WTC11 (cell line): ENCODE measurements at regions of chr15 and their contacts with region 1.

Region 1: GRCh38 chr15:32664796-32665195 is 23.3 kb downstream of the SCG5 start:
- DNase-seq: no peak
- ATAC-seq: no peak
- H3K4me3 Mint-ChIP-seq: no peak overlapping the region
- H3K27ac Mint-ChIP-seq: no peak overlapping the region
- H3K4me1 Mint-ChIP-seq: peaks cover 17% of the 10 kb centered on the region
- H3K27me3 Mint-ChIP-seq: no peaks in the 10 kb centered on the region
- CTCF ChIP-seq: no peak

Region 2: DNA sequence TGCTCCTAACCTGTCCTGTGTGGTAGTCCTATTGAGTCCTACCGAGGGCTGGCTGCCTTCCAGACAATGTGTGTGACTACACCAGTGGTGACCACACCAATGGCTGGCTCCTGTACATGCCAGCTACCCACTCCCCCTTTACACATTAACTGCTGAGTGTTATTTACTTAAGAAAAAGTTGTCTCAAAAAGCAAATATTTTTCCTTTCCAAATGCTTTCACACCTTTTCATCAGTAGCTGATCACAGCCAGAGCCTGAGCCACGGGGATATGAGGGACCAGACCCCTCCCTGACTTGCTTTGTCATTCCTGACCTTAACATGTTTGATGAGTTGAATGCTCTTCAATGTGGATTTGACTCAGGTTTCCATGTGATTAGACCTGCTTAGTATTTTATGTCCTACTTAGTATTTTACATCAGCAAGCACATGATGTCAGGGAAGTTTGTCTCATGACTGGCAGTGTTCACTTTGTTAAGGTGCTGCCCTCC is 23.4 kb after region 1 on chr15:
- CTCF ChIA-PET with region 1: no interaction called
- POLR2A ChIA-PET with region 1: no interaction called
- DNase-seq: no peak
- ATAC-seq: no peak
- H3K4me3 Mint-ChIP-seq: no peak overlapping the region
- H3K27ac Mint-ChIP-seq: no peak overlapping the region
- H3K4me1 Mint-ChIP-seq: peaks cover 23% of the 10 kb centered on the region
- H3K27me3 Mint-ChIP-seq: no peaks in the 10 kb centered on the region
- CTCF ChIP-seq: no peak

Region 3: GRCh38 chr15:32784581-32784980 is 119.8 kb after region 1 on chr15:
- CTCF ChIA-PET with region 1: no interaction called
- POLR2A ChIA-PET with region 1: no interaction called
- DNase-seq: no peak
- ATAC-seq: no peak
- H3K4me3 Mint-ChIP-seq: no peak overlapping the region
- H3K27ac Mint-ChIP-seq: no peak overlapping the region
- H3K4me1 Mint-ChIP-seq: peaks cover 9% of the 10 kb centered on the region
- H3K27me3 Mint-ChIP-seq: no peaks in the 10 kb centered on the region
- CTCF ChIP-seq: no peak

Region 4: DNA sequence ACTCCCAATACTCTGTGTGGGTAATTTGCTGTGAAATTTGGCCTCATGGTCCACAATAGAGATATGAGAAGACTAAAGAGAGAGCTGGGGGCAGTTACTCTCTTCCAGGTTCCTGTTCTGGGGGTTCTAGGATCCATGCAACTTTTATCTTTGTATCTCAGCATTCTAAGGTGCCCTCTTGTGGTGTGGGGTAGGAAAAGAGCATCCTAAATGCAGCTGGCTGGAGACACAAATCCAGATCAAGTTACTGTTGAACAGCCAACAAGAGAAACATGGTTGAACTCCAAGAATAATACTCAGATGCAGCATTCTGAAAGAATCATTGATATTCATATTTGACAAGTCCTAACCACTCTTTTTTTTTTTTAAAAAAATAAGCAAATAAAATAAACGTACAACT is 291.2 kb after region 1 on chr15:
- CTCF ChIA-PET with region 1: interaction called, 18 read pairs
- POLR2A ChIA-PET with region 1: no interaction called
- DNase-seq: no peak
- ATAC-seq: peak; percentile 58
- H3K4me3 Mint-ChIP-seq: no peak overlapping the region
- H3K27ac Mint-ChIP-seq: no peak overlapping the region
- H3K4me1 Mint-ChIP-seq: peaks cover 39% of the 10 kb centered on the region
- H3K27me3 Mint-ChIP-seq: no peaks in the 10 kb centered on the region; the same call in 1 of the 2 replicates
- CTCF ChIP-seq: 0 out of 2 replicates have a peak, but pooled peaks have one; percentile 17